Left cardiac atrium (tissue), 4 donors: ENCODE measurements at regions of chr3 and their contacts with region 1.

Region 1: DNA sequence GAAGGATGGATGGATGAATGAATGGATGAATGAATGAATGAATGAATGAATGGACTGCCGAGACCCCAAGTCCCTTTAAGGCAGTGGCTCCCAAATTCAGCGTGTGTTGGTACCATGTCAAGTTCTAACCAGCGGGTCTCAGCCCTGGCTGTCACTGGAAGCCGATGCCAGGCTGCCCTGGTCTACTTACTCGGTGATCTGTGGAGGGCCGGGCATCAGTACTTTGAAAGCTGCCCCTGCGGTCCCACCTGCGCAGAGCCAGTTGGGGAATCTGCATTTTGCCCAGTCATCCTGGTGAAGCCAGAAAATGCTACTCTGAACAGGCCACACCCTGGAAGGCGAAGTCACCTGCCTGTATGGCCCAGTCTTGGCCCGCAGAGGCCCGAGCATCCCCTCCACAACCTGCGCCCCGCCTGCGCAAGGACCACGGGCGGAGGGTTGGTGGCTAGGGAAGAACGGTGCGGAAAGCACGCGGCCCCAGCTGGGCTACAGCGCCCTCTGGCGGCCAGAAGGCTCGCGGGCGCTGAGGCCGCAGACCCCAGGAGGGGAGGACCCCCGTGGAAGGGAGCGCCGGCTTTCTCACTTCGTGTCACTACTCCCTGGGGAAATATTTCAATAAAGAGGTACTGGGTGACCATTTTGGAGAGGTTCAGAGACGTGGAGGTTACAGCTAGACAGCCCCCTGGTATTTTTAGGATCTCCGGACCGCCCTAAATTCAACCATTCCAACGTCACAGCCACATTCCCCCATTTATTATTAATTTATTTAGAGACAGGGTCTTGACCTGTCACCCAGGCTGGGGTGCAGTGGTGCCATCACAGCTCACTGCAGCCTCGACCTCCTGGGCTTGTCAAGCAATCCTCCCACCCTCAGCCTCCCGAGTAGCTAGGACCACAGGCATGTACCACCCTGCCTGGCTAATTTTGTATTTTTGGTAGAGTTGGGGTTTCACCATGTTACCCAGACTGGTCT is 34.9 kb downstream of the PRKCD start:
- DNase-seq: peak; percentile 59
- ATAC-seq: peak; percentile 59 to 72

Region 2: GRCh38 chr3:52820736-52821135 is 375.2 kb before region 1 on chr3:
- intact Hi-C with region 1: no loop called
- DNase-seq: no peak
- ATAC-seq: no peak

Region 3: GRCh38 chr3:53114011-53114400 is 81.9 kb before region 1 on chr3:
- intact Hi-C with region 1: loop called (anchors 1 to 2 kb)
- DNase-seq: peak; percentile 82
- ATAC-seq: peak; percentile 83 to 85

Region 4: DNA sequence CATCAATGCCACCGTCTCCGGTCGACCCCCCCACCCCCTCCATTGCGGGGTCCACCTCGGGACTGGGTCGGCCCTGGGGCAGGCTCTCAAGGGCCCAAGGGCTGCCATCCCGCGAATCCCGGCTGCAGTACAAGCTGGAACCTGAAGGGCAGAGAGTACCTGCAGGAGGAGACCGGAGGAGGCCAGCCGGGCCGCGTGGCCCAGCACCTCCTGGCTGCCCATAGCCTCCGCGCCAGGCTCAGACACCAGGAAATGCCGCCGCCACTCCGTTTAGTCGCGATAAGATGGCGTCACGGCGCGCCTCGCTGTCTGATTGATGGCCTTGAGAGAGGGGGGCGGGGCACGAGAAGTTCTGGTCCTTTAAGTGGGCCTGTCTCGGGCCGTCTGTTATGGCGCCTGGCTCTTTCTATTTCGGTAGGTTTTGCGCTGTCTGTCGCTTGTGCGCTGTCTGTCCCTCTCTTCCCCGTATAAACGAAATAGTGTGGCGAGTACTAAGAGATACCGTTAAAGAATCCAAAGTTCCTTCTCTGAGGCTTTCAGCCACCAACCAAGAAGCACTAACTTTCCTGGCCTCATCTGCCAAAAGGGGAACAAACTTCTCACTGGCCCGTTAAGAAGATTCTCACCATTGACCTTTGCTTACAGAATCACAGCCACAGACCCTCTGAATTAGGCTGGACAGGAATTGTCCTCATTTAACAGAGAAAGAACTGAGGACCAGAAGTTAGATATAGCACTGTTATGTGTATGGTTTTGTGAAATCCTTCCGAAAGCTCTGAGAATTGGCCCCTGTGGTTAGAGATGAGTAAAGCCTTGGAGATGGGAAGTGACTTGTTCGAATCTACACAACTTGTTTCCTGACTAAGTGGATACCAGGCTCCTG is 65.5 kb before region 1 on chr3 and contains the start of gene RFT1:
- intact Hi-C with region 1: loop called (anchors 5 kb)
- DNase-seq: peak; percentile 99
- ATAC-seq: peak; percentile 97
- total RNA-seq, gene RFT1: 11.8 to 12.6 TPM

Region 5: GRCh38 chr3:53293867-53294266 is 98.0 kb after region 1 on chr3:
- intact Hi-C with region 1: no loop called
- DNase-seq: no peak
- ATAC-seq: peak; percentile 51 to 72

Region 6: DNA sequence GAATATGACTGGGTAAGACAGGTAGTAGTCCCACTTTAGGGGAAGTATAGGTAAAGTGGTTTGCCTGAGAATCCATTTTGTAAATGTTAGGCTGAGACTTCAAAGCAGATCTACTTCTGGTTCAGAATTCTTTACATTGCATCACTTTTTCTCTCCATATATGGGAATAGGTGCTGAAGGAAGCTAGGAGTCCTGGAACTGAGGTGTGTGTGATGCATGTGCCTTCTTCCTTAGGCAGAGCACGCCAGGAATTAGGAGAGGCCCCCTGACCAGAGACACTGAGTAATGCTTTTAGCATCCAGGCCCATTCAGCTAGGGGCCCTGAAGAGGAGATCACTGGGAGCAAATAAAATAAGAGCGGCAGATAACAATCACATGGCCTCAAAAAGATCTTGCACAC is 220.6 kb after region 1 on chr3:
- intact Hi-C with region 1: no loop called
- DNase-seq: no peak
- ATAC-seq: no peak

Region 7: GRCh38 chr3:53604232-53604631 is 408.3 kb after region 1 on chr3:
- intact Hi-C with region 1: no loop called
- DNase-seq: no peak
- ATAC-seq: no peak